ENCODE measurements at regions of chr5 and their contacts with region 1.

Region 1: DNA sequence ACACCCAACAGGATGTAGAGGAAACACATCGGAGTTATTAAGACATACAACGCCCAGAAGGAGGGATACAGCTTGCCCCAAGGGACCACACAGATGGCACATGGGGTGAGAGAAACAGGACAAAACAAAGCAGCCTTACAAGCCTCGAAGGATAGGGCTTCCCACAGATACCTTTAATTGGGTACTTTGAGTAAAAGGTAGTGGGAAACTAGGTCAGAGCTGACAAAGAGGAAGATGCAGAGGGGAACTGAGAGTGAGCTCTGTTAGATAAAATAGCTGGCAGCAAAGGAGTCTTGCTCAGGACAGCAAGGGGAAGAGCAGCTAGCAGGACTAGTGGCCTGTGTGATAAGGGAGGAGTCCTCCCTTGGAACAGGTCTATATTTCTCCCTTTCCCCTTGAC is 48.2 kb downstream of the OTP start:
- DNase-seq: peak; percentile 98
- ATAC-seq: peak; percentile 99
- H3K4me3 ChIP-seq: no peak overlapping the region
- H3K27ac ChIP-seq: no peak overlapping the region
- H3K4me1 ChIP-seq: no peaks in the 10 kb centered on the region
- H3K27me3 ChIP-seq: no peaks in the 10 kb centered on the region
- CTCF ChIP-seq: no peak
- EP300 ChIP-seq: peak in 1 of 2 experiments; percentile 77; a peak in 3 of 4 replicates
- POLR2A ChIP-seq: no peak
- RAD21 ChIP-seq: no peak

Region 2: GRCh38 chr5:77483682-77484081 is 106.7 kb before region 1 on chr5:
- CTCF ChIA-PET with region 1: no interaction called
- POLR2A ChIA-PET with region 1: no interaction called
- RAD21 ChIA-PET with region 1: no interaction called
- SMC1A ChIA-PET with region 1: no interaction called
- in situ Hi-C with region 1: no loop called
- intact Hi-C with region 1: no loop called
- DNase-seq: no peak
- ATAC-seq: no peak
- H3K4me3 ChIP-seq: no peak overlapping the region
- H3K27ac ChIP-seq: no peak overlapping the region
- H3K4me1 ChIP-seq: no peaks in the 10 kb centered on the region
- H3K27me3 ChIP-seq: no peaks in the 10 kb centered on the region
- CTCF ChIP-seq: no peak
- EP300 ChIP-seq: no peak
- POLR2A ChIP-seq: no peak
- RAD21 ChIP-seq: no peak

Region 3: GRCh38 chr5:77620426-77620825 is 30.1 kb after region 1 on chr5:
- CTCF ChIA-PET with region 1: no interaction called
- POLR2A ChIA-PET with region 1: interaction called, 3 read pairs
- RAD21 ChIA-PET with region 1: interaction called, 4 read pairs
- SMC1A ChIA-PET with region 1: interaction called, 4 read pairs
- in situ Hi-C with region 1: no loop called
- intact Hi-C with region 1: loop called (anchors 2 kb)
- DNase-seq: no peak
- ATAC-seq: peak; percentile 65
- H3K4me3 ChIP-seq: no peak overlapping the region
- H3K27ac ChIP-seq: no peak overlapping the region
- H3K4me1 ChIP-seq: no peaks in the 10 kb centered on the region
- H3K27me3 ChIP-seq: no peaks in the 10 kb centered on the region; a peak in 1 of 4 replicates
- CTCF ChIP-seq: peak in 1 of 3 experiments; percentile 11; a peak in 1 of 6 replicates
- EP300 ChIP-seq: no peak
- POLR2A ChIP-seq: no peak
- RAD21 ChIP-seq: no peak